PC-3 (cell line): ENCODE measurements at regions of chr10 and their contacts with region 1.

Region 1: GRCh38 chr10:112955582-112956421 is 5.8 kb downstream of the TCF7L2 start:
- DNase-seq: peak; percentile 84
- ATAC-seq: peak; percentile 40
- H3K4me3 ChIP-seq: peak overlapping the region; percentile 91
- H3K27ac ChIP-seq: peak overlapping the region; percentile 92
- H3K4me1 ChIP-seq: peaks cover 55% of the 10 kb centered on the region
- H3K27me3 ChIP-seq: no peaks in the 10 kb centered on the region
- CTCF ChIP-seq: no peak

Region 2: DNA sequence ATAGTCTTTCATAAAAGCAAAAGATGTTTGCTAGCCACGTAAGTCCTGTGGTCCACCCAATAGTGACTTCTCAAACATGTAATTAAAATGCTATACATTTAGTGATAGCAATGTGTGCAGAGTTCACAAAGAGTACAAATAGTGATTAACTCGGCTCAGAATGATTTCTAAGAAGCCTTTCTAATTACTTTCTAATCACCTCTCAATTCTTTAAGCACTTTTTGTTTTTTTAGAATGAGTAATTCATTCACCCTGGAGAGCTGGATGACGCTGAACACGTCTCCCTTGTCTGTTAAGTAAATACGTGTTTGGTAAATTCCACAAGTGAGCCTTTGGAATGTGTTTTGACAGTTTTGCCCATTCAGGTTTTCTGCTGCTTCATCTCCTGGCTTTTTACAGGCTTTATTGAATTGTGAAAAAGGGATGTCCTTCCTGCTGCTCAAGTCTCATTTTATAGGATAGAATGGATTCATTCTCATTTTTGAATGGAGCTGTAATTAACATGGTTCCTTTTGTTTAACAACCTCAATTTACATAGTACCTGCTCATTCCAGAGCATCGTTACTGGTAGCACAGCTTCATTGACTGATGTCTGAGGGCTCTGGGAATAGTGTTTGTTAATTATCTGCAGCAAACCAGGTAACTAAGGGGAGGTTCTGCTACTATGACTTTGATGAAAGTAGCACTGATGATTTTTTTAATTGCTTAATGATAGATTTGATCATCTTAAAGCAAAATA is 296.7 kb before region 1 on chr10:
- CTCF ChIA-PET with region 1: no interaction called
- POLR2A ChIA-PET with region 1: interaction called, 7 read pairs
- intact Hi-C with region 1: loop called (anchors 5 kb)
- DNase-seq: peak; percentile 80
- ATAC-seq: peak; percentile 73
- H3K4me3 ChIP-seq: peak overlapping the region; percentile 40; the same call in 1 of the 2 replicates
- H3K27ac ChIP-seq: peak overlapping the region; percentile 90
- H3K4me1 ChIP-seq: peaks cover 43% of the 10 kb centered on the region
- H3K27me3 ChIP-seq: no peaks in the 10 kb centered on the region
- CTCF ChIP-seq: no peak

Region 3: DNA sequence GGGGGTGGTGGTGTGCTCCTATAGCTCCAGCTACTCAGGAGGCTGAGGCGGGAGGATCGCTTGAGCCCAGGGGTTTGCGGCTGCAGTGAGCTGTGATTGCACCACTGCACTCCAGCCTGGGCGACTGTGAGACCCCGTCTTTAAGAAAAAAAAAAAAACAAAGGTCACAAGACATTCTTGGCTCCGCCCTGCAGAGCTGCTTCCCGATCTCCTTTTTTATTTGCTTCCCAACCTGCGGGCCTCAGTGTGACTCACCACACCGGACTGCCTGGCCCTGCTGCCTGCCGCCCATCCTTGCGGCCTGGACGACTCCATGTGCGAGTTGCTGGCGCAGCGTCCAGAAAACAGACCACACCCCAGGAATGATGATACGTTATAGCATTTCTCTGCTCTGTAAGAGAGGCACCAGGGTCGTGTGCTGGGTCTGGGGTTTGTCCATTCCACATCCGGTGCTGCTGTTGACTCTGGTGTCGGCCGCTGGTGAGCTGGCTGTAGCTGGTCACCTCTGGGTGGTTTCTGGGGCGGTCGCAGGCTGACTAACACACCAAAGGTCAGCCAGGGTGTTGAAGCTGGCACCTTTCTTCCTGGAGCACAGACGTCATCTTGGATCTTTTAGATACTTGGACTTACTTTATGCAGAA is 117.9 kb after region 1 on chr10:
- CTCF ChIA-PET with region 1: no interaction called
- POLR2A ChIA-PET with region 1: no interaction called
- intact Hi-C with region 1: loop called (anchors 5 kb)
- DNase-seq: peak; percentile 92
- ATAC-seq: peak; percentile 92
- H3K4me3 ChIP-seq: no peak overlapping the region; the same call in 1 of the 2 replicates
- H3K27ac ChIP-seq: peak overlapping the region; percentile 81
- H3K4me1 ChIP-seq: peaks cover 22% of the 10 kb centered on the region
- H3K27me3 ChIP-seq: no peaks in the 10 kb centered on the region
- CTCF ChIP-seq: no peak

Region 4: GRCh38 chr10:113087165-113088029 is 131.6 kb after region 1 on chr10:
- CTCF ChIA-PET with region 1: no interaction called
- POLR2A ChIA-PET with region 1: no interaction called
- intact Hi-C with region 1: loop called (anchors 2 kb)
- DNase-seq: peak; percentile 95
- ATAC-seq: peak; percentile 92
- H3K4me3 ChIP-seq: no peak overlapping the region
- H3K27ac ChIP-seq: peak overlapping the region; percentile 97
- H3K4me1 ChIP-seq: peaks cover 44% of the 10 kb centered on the region
- H3K27me3 ChIP-seq: no peaks in the 10 kb centered on the region
- CTCF ChIP-seq: no peak

Region 5: GRCh38 chr10:113093188-113094113 is 137.6 kb after region 1 on chr10:
- CTCF ChIA-PET with region 1: no interaction called
- POLR2A ChIA-PET with region 1: interaction called, 3 read pairs
- intact Hi-C with region 1: loop called (anchors 1 kb)
- DNase-seq: peak; percentile 93
- ATAC-seq: peak; percentile 74
- H3K4me3 ChIP-seq: peak overlapping the region; percentile 46
- H3K27ac ChIP-seq: peak overlapping the region; percentile 98
- H3K4me1 ChIP-seq: peaks cover 46% of the 10 kb centered on the region
- H3K27me3 ChIP-seq: no peaks in the 10 kb centered on the region
- CTCF ChIP-seq: no peak